Activated CD4-positive, alpha-beta T cell treated with anti-CD3 and anti-CD28 coated beads for 36 hours (primary cell): ENCODE measurements at regions of chr16 and their contacts with region 1.

Region 1: GRCh38 chr16:26050472-26050871 is 358.7 kb downstream of the HS3ST4 start:
- DNase-seq: no peak
- ATAC-seq: no peak
- H3K4me3 Mint-ChIP-seq: no peak overlapping the region
- H3K27ac Mint-ChIP-seq: no peak overlapping the region
- H3K4me1 Mint-ChIP-seq: no peaks in the 10 kb centered on the region
- H3K27me3 Mint-ChIP-seq: peaks cover 17% of the 10 kb centered on the region

Region 2: DNA sequence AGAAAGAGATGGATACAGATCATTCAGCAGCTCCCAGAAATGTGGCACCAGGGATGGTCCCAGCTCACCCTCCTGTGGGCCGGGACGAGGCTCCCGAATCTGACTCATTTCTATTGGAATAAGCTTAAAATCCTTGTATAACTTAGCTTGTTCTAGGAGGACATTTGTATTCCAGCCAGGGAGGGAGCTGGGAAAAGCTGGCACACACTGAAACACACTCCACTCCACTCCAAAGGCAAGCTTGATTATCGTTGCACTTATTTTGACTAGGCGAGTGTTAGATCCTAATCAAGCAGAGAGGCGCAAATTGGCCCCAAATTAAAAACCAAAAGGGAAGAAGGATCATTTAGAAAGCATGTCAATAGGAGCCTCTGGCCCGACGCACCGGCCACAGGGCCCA is 19.2 kb before region 1 on chr16:
- CTCF ChIA-PET with region 1: no interaction called
- POLR2A ChIA-PET with region 1: no interaction called
- intact Hi-C with region 1: no loop called
- DNase-seq: no peak
- ATAC-seq: no peak
- H3K4me3 Mint-ChIP-seq: no peak overlapping the region
- H3K27ac Mint-ChIP-seq: no peak overlapping the region
- H3K4me1 Mint-ChIP-seq: no peaks in the 10 kb centered on the region
- H3K27me3 Mint-ChIP-seq: peaks cover 8% of the 10 kb centered on the region

Region 3: GRCh38 chr16:26464576-26465266 is 414.2 kb after region 1 on chr16:
- CTCF ChIA-PET with region 1: no interaction called
- POLR2A ChIA-PET with region 1: interaction called, 10 read pairs
- intact Hi-C with region 1: no loop called
- DNase-seq: no peak
- ATAC-seq: no peak
- H3K4me3 Mint-ChIP-seq: no peak overlapping the region
- H3K27ac Mint-ChIP-seq: no peak overlapping the region
- H3K4me1 Mint-ChIP-seq: no peaks in the 10 kb centered on the region
- H3K27me3 Mint-ChIP-seq: peaks cover 26% of the 10 kb centered on the region